GM12878 (cell line): ENCODE measurements at regions of chr11 and their contacts with region 1.

Region 1: DNA sequence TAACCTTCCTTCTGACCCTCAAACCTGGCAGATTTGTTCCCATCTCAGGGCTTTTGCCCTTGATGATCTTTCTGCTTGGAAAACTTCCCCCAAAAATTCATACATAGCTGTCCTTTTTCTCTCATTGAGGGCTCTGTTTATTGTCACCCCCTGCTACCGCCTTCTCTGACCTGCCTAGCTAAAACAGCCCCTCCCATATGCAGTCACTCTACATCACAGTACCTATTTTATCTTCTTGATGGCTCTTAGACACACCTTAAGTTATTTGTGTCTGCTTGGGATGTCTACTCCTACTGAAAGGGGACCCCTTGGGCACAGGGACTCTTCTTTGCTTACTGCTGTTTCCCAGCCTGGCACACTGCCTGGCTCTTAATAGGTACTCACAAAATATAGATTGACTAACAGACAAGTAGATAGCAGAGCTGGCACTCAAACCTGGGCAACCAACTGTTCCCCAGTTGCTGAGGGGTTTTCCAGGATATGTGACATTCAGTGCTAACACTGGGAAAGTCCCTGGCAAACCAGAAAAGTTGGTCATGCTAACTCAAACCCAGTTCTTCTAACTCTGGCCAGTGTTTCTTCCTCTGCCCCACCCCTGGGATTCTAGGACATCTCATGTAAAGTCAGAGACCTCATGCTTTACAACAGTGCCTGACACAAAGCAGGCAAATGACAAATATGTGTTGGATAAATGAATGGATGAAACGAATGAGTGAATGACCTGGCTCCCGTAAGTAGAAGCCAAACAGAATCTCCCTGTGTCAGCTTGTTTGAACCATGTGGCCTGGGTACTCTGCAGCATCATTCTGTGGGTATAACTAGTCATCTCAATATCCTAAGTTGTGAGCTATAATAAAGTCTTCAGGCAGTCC is 19.8 kb upstream of the FJX1 start:
- DNase-seq: peak; percentile 40
- ATAC-seq: peak; percentile 92
- H3K4me3 ChIP-seq: no peak overlapping the region
- H3K27ac ChIP-seq: peak overlapping the region; percentile 61; the same call in 1 of the 2 replicates
- H3K4me1 ChIP-seq: no peaks in the 10 kb centered on the region; the same call in none of the 2 replicates
- H3K27me3 ChIP-seq: no peaks in the 10 kb centered on the region
- CTCF ChIP-seq: no peak
- EP300 ChIP-seq: no peak
- POLR2A ChIP-seq: no peak
- RAD21 ChIP-seq: no peak

Region 2: GRCh38 chr11:35458846-35459245 is 139.6 kb before region 1 on chr11:
- CTCF ChIA-PET with region 1: no interaction called
- POLR2A ChIA-PET with region 1: no interaction called
- RAD21 ChIA-PET with region 1: no interaction called
- SMC1A ChIA-PET with region 1: no interaction called
- in situ Hi-C with region 1: no loop called
- intact Hi-C with region 1: no loop called
- DNase-seq: no peak
- ATAC-seq: no peak
- H3K4me3 ChIP-seq: no peak overlapping the region
- H3K27ac ChIP-seq: no peak overlapping the region
- H3K4me1 ChIP-seq: no peaks in the 10 kb centered on the region
- H3K27me3 ChIP-seq: no peaks in the 10 kb centered on the region; a peak in 3 of 4 replicates
- CTCF ChIP-seq: no peak
- EP300 ChIP-seq: no peak
- POLR2A ChIP-seq: no peak
- RAD21 ChIP-seq: no peak

Region 3: GRCh38 chr11:35610631-35611030 is 12.1 kb after region 1 on chr11:
- CTCF ChIA-PET with region 1: interaction called, 10 read pairs
- POLR2A ChIA-PET with region 1: no interaction called
- RAD21 ChIA-PET with region 1: no interaction called
- SMC1A ChIA-PET with region 1: interaction called, 5 read pairs
- in situ Hi-C with region 1: no loop called
- intact Hi-C with region 1: no loop called
- DNase-seq: no peak
- ATAC-seq: no peak
- H3K4me3 ChIP-seq: no peak overlapping the region
- H3K27ac ChIP-seq: no peak overlapping the region
- H3K4me1 ChIP-seq: no peaks in the 10 kb centered on the region
- H3K27me3 ChIP-seq: no peaks in the 10 kb centered on the region; a peak in 2 of 4 replicates
- CTCF ChIP-seq: no peak
- EP300 ChIP-seq: no peak
- POLR2A ChIP-seq: no peak
- RAD21 ChIP-seq: no peak